Vagina (tissue), 2 donors: ENCODE measurements at regions of chr9 and their contacts with region 1.

Region 1: GRCh38 chr9:115591584-115591984 is 473.6 kb upstream of the TNC start:
- DNase-seq: peak in 1 of 2 donors; percentile 91
- H3K4me3 ChIP-seq: no peak overlapping the region
- H3K27ac ChIP-seq: no peak overlapping the region
- H3K4me1 ChIP-seq: peaks cover 23% of the 10 kb centered on the region
- H3K27me3 ChIP-seq: no peaks in the 10 kb centered on the region
- CTCF ChIP-seq: peak in 2 of 3 experiments; percentile 64 to 79
- POLR2A ChIP-seq: no peak

Region 2: DNA sequence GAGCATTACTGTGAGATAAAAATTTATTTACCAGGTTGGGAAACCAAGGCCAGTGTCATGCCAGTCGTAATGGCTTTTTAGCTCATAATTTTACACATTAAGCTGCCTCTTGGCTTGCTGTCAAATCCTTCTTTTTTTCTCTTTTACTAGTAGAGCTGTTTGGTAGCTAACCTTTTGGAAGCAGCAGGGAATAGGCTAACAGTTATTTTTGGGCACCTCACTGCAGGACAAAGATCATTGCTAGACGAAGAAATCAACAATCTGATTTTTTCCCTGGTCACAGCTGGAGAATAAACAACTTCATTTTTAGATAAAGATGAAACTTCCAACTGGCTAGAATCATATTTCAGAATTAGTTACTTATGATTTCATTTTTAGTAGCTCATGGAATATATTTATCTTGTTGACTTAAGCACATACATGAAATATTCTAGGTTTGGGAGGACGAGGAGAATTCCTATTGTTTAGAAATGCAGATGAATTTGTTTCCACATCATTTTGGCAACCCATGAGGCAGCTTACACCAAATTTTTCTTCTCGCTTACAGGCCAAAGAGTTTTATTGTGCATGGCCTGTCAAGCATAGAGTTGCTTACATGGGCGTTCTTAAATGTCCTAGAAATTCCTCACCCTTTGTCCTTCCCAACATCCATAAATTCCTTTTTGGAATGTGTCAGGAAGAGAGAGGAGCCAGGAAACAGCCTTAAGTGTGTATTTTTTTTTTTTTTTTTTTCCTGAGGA is 493.2 kb before region 1 on chr9:
- intact Hi-C with region 1: no loop called
- DNase-seq: no peak
- H3K4me3 ChIP-seq: no peak overlapping the region
- H3K27ac ChIP-seq: peak overlapping the region; percentile 17
- H3K4me1 ChIP-seq: peaks cover 23% of the 10 kb centered on the region
- H3K27me3 ChIP-seq: no peaks in the 10 kb centered on the region
- CTCF ChIP-seq: no peak
- POLR2A ChIP-seq: no peak

Region 3: GRCh38 chr9:115341426-115341825 is 250.2 kb before region 1 on chr9:
- intact Hi-C with region 1: no loop called
- DNase-seq: no peak
- H3K4me3 ChIP-seq: no peak overlapping the region
- H3K27ac ChIP-seq: peak overlapping the region; percentile 46
- H3K4me1 ChIP-seq: peaks cover 14% of the 10 kb centered on the region
- H3K27me3 ChIP-seq: no peaks in the 10 kb centered on the region
- CTCF ChIP-seq: no peak
- POLR2A ChIP-seq: no peak

Region 4: DNA sequence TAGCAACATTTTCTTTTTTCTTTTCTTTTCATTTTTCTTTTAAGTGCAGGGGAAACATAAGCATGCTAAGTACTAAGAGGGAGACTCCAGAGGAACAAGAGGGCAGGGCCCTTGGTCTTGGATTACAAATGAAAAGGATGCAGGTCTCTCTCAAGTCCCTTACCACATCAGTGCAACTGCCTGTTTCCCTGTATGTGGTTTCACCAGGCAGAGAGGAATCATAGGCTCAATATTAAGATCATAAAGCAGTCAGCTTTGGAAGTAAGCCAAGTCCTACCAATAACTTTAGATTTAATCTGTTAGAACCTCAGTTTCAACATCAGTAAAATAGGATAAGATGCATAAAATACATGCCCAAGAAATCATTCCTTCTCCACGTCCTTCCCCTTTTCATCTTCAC is 139.3 kb after region 1 on chr9:
- intact Hi-C with region 1: no loop called
- DNase-seq: no peak
- H3K4me3 ChIP-seq: no peak overlapping the region
- H3K27ac ChIP-seq: no peak overlapping the region
- H3K4me1 ChIP-seq: no peaks in the 10 kb centered on the region
- H3K27me3 ChIP-seq: no peaks in the 10 kb centered on the region
- CTCF ChIP-seq: no peak
- POLR2A ChIP-seq: no peak

Region 5: DNA sequence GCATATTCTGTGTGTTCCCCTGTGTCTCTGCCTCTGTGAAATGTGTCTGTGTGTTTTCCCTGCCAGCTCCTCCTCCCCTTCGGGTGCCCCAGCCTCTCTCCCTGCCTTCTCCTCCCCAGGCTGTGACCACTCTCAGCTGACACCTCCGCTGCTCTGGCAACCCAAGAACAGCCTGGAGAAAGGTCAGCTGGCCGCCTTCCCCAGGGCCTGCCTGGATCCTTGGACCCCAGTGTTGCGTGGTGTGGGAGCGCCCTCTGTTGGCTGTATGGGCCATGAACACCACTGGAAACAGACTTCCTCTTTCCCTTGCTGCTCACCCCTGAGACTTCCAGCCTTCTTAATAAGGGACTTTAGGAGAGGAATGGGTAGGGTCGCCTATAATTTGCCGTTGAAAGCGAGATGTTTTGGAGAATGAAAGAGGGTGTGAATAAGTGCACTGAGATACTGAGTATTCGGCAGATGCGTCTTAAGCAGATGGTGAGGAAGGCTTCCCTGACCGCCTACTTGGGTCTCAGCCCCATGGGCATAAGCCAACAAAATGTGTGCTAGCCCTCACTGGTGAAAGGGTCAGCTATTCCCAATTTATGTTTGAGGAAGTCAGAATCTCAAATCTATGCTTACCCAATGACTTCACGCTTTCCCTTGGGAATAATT is 980.6 kb after region 1 on chr9:
- intact Hi-C with region 1: loop called (anchors 10 kb)
- DNase-seq: no peak
- H3K4me3 ChIP-seq: no peak overlapping the region
- H3K27ac ChIP-seq: peak overlapping the region; percentile 67
- H3K4me1 ChIP-seq: peaks cover 18% of the 10 kb centered on the region
- H3K27me3 ChIP-seq: no peaks in the 10 kb centered on the region
- CTCF ChIP-seq: peak; percentile 63 to 94 (median 85)
- POLR2A ChIP-seq: no peak

Region 6: GRCh38 chr9:116661037-116661954 is 1069.7 kb after region 1 on chr9:
- intact Hi-C with region 1: loop called (anchors 10 kb)
- DNase-seq: no peak
- H3K4me3 ChIP-seq: no peak overlapping the region
- H3K27ac ChIP-seq: no peak overlapping the region
- H3K4me1 ChIP-seq: peaks cover 20% of the 10 kb centered on the region
- H3K27me3 ChIP-seq: no peaks in the 10 kb centered on the region
- CTCF ChIP-seq: peak; percentile 21 to 64 (median 56)
- POLR2A ChIP-seq: no peak